Activated T-helper 2 cell treated with anti-CD3 and anti-CD28 coated beads, Interferon-gamma antibody, Interleukin-2, Interleukin-4, amounts not matched to agents 10 μg/mL and 5 μg/mL and 100 μg/mL, durations not matched to agents 14 hours and 24 hours and 36 hours (primary cell): ENCODE measurements at regions of chr21 and their contacts with region 1.

Region 1: GRCh38 chr21:15729674-15730483 is at the start of gene USP25:
- DNase-seq: peak; percentile 74
- H3K4me3 Mint-ChIP-seq: peak within 1 kb of the TSS; percentile 92
- H3K27ac Mint-ChIP-seq: peak within 1 kb of the TSS; percentile 84
- H3K4me1 Mint-ChIP-seq: peaks cover 18% of the 10 kb centered on the region
- H3K27me3 Mint-ChIP-seq: peaks cover 21% of the 10 kb centered on the region
- total RNA-seq, gene USP25: 21.7 and 25.8 TPM in 2 replicates

Region 2: GRCh38 chr21:14382835-14383594 is 1346.9 kb before region 1 on chr21 and contains the start of gene HSPA13:
- intact Hi-C with region 1: loop called (anchors 2 kb)
- DNase-seq: peak; percentile 99
- H3K4me3 Mint-ChIP-seq: peak within 1 kb of the TSS; percentile 98
- H3K27ac Mint-ChIP-seq: peak within 1 kb of the TSS; percentile 98
- H3K4me1 Mint-ChIP-seq: peaks cover 34% of the 10 kb centered on the region
- H3K27me3 Mint-ChIP-seq: peaks cover 3% of the 10 kb centered on the region
- total RNA-seq, gene HSPA13: 40.6 and 47.6 TPM in 2 replicates

Region 3: GRCh38 chr21:15437883-15438282 is 292.0 kb before region 1 on chr21:
- intact Hi-C with region 1: loop called (anchors 5 kb)
- DNase-seq: no peak
- H3K4me3 Mint-ChIP-seq: no peak overlapping the region
- H3K27ac Mint-ChIP-seq: no peak overlapping the region
- H3K4me1 Mint-ChIP-seq: peaks cover 28% of the 10 kb centered on the region
- H3K27me3 Mint-ChIP-seq: no peaks in the 10 kb centered on the region

Region 4: GRCh38 chr21:15775981-15776380 is 46.1 kb after region 1 on chr21:
- intact Hi-C with region 1: loop called (anchors 5 kb)
- DNase-seq: no peak
- H3K4me3 Mint-ChIP-seq: no peak overlapping the region
- H3K27ac Mint-ChIP-seq: no peak overlapping the region
- H3K4me1 Mint-ChIP-seq: peaks cover 14% of the 10 kb centered on the region
- H3K27me3 Mint-ChIP-seq: no peaks in the 10 kb centered on the region

Region 5: GRCh38 chr21:15815285-15815684 is 85.4 kb after region 1 on chr21:
- intact Hi-C with region 1: no loop called
- DNase-seq: no peak
- H3K4me3 Mint-ChIP-seq: no peak overlapping the region
- H3K27ac Mint-ChIP-seq: no peak overlapping the region
- H3K4me1 Mint-ChIP-seq: no peaks in the 10 kb centered on the region
- H3K27me3 Mint-ChIP-seq: no peaks in the 10 kb centered on the region

Region 6: GRCh38 chr21:15932726-15933125 is 202.8 kb after region 1 on chr21:
- intact Hi-C with region 1: no loop called
- DNase-seq: no peak
- H3K4me3 Mint-ChIP-seq: no peak overlapping the region
- H3K27ac Mint-ChIP-seq: no peak overlapping the region
- H3K4me1 Mint-ChIP-seq: no peaks in the 10 kb centered on the region
- H3K27me3 Mint-ChIP-seq: no peaks in the 10 kb centered on the region

Region 7: DNA sequence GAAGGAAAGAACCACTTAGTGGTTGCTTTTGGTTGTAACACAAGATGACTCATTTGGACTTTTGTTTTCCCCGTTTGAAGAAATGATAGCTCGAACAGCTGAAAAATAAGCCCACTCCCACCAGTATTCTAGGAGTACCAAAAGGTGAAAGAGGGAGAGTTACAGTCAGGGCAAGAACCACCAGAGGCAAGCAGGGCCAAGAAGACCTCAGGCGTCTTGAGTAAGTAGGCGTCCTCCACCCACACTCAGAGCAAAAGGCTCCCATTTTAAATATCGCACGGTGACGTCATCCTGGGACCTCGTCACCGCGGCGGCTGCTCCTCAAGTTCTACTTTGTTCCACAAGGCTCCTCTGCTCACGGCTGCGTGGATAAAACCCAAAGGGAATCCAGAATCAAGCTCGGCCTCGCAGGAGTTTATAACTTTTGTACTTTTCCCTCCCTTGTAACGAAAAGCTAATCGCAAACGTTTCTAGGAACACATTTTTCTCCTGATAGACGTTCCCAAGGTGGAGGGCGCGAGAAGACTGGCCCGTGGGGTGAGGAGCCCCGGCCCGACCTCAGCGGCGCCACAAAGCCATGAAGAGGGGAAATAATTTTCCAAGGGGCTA is 1881.6 kb after region 1 on chr21:
- intact Hi-C with region 1: loop called (anchors 5 kb)
- DNase-seq: peak; percentile 76
- H3K4me3 Mint-ChIP-seq: peak overlapping the region; percentile 92
- H3K27ac Mint-ChIP-seq: peak overlapping the region; percentile 96
- H3K4me1 Mint-ChIP-seq: peaks cover 53% of the 10 kb centered on the region
- H3K27me3 Mint-ChIP-seq: no peaks in the 10 kb centered on the region